A549 (cell line): ENCODE measurements at regions of chr14 and their contacts with region 1.

Region 1: GRCh38 chr14:67269298-67270061 is 28.2 kb downstream of the PALS1 start:
- DNase-seq: no peak
- ATAC-seq: peak in 1 of 2 experiments; percentile 49; a peak in 3 of 6 replicates
- H3K4me3 ChIP-seq: no peak overlapping the region
- H3K27ac ChIP-seq: no peak overlapping the region
- H3K4me1 ChIP-seq: peaks cover 20% of the 10 kb centered on the region
- CTCF ChIP-seq: no peak
- EP300 ChIP-seq: no peak
- POLR2A ChIP-seq: no peak
- RAD21 ChIP-seq: no peak

Region 2: DNA sequence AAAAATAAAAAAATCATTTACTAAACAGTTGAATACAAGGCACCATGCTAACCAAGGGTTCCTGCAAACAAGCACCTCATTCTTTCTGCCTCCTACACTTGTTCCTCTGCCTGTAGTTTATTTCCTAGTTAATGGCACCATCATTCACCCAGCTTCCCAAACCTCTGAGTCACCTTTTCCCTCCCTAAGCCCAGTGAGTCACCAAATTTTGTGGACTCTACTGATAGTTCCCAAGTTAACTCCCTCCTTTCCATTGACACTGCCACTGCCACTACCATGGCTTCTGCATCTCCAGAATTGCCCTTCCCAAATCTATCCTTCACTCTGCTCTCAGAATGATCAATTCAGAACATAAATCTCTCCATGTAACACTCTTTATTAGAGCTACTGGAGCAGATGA is 82.3 kb before region 1 on chr14:
- CTCF ChIA-PET with region 1: no interaction called
- POLR2A ChIA-PET with region 1: no interaction called
- DNase-seq: peak; percentile 68 to 72
- ATAC-seq: peak; percentile 91 to 95
- H3K4me3 ChIP-seq: no peak overlapping the region
- H3K27ac ChIP-seq: peak overlapping the region; percentile 16 to 69; a peak in 5 of 6 replicates
- H3K4me1 ChIP-seq: peaks cover 23% of the 10 kb centered on the region
- CTCF ChIP-seq: no peak
- EP300 ChIP-seq: no peak
- POLR2A ChIP-seq: no peak
- RAD21 ChIP-seq: peak in 1 of 2 experiments; percentile 11; a peak in 1 of 5 replicates

Region 3: DNA sequence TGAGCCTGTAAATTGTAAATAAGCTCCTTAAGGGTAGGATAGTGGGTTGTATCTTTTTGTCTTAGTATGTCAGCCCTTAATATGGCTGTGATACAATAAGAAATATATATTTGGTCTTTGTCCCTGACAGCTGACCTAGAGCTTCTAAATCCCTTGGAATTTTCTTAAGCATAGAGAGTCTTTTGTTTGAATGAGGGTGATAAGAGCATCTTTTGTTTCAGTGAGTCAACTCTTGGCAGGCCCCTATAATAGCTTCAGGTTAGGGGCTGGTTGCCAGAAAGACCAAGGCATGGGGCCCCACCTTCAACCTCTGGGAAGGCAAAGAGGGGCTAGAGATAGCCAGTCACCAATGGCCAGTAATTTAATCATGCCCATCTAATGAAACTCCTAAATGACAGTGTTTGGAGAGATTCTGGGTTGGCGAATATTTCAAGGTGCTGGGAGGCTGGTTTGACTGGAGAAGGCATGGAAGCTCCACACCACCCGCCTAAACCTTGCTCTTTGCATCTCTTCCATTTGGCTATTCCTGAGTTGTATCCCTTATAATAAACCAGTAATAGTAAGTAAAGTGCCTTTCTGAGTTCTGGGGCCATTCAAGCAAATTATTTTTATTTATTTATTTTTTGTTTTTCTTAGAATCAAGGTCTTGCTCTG is 17.8 kb before region 1 on chr14:
- CTCF ChIA-PET with region 1: interaction called, 12 read pairs
- POLR2A ChIA-PET with region 1: no interaction called
- DNase-seq: no peak
- ATAC-seq: peak in 1 of 2 experiments; percentile 37; a peak in 3 of 6 replicates
- H3K4me3 ChIP-seq: no peak overlapping the region
- H3K27ac ChIP-seq: no peak overlapping the region
- H3K4me1 ChIP-seq: peaks cover 44% of the 10 kb centered on the region
- CTCF ChIP-seq: no peak
- EP300 ChIP-seq: no peak
- POLR2A ChIP-seq: no peak
- RAD21 ChIP-seq: no peak

Region 4: DNA sequence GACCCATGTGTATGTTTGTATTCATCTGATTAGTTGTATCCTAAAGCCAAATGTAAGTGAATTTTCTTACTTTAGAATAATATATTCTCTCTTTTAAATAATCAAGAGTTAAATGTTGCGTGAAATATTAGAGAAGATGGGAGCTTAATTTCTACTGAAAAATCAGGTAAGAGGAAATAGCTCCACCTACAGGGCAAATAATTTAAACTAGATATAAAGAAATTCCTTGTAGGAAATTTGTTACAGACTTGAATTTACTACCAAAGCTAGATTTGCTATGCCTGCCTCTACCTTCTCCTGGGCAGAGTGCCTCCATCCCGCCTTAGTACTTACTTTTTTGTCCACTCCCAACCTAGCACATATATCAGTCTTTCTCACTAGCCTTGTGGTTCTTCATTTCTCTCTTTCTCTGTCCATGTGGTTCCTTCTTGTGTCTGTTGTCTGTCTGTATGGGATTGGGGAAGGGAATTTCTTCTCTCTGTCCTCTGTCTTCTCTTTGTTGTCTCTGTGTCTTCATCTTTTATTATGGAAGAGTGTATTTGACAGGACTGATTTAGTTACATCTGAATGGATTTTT is 16.5 kb after region 1 on chr14:
- CTCF ChIA-PET with region 1: interaction called, 15 read pairs
- POLR2A ChIA-PET with region 1: no interaction called
- DNase-seq: peak; percentile 30 to 59
- ATAC-seq: peak in 1 of 2 experiments; percentile 50; a peak in 2 of 6 replicates
- H3K4me3 ChIP-seq: no peak overlapping the region
- H3K27ac ChIP-seq: no peak overlapping the region
- H3K4me1 ChIP-seq: peaks cover 6% of the 10 kb centered on the region; the same call in 1 of the 3 replicates
- CTCF ChIP-seq: peak; percentile 81
- EP300 ChIP-seq: no peak
- POLR2A ChIP-seq: no peak
- RAD21 ChIP-seq: peak; percentile 72 to 79